ENCODE measurements at regions of chr9 and their contacts with region 1.

Region 1: GRCh38 chr9:34637356-34638137 is at the start of gene SIGMAR1:
- DNase-seq: peak; percentile 85 to 96 (median 93)
- ATAC-seq: peak; percentile 95
- H3K4me3 ChIP-seq: peak within 1 kb of the TSS; percentile 63 to 69
- H3K4me3 Mint-ChIP-seq: peak within 1 kb of the TSS; percentile 86
- H3K27ac ChIP-seq: peak within 1 kb of the TSS; percentile 55 to 86
- H3K27ac Mint-ChIP-seq: peak within 1 kb of the TSS; percentile 86
- H3K4me1 ChIP-seq: peaks cover 15% of the 10 kb centered on the region
- H3K4me1 Mint-ChIP-seq: peaks cover 36% of the 10 kb centered on the region
- H3K27me3 ChIP-seq: no peaks in the 10 kb centered on the region
- H3K27me3 Mint-ChIP-seq: no peaks in the 10 kb centered on the region
- CTCF ChIP-seq: no peak
- total RNA-seq, gene SIGMAR1: 8.5 to 9.6 TPM

Region 2: GRCh38 chr9:34437006-34437925 is 200.3 kb before region 1 on chr9:
- CTCF ChIA-PET with region 1: no interaction called
- POLR2A ChIA-PET with region 1: no interaction called
- intact Hi-C with region 1: loop called (anchors 1 kb)
- DNase-seq: peak; percentile 20 to 83 (median 61)
- ATAC-seq: peak; percentile 90
- H3K4me3 ChIP-seq: no peak overlapping the region
- H3K4me3 Mint-ChIP-seq: no peak overlapping the region
- H3K27ac ChIP-seq: no peak overlapping the region
- H3K27ac Mint-ChIP-seq: no peak overlapping the region
- H3K4me1 ChIP-seq: peaks cover 8% of the 10 kb centered on the region
- H3K4me1 Mint-ChIP-seq: peaks cover 17% of the 10 kb centered on the region
- H3K27me3 ChIP-seq: no peaks in the 10 kb centered on the region
- H3K27me3 Mint-ChIP-seq: no peaks in the 10 kb centered on the region
- CTCF ChIP-seq: peak; percentile 77

Region 3: GRCh38 chr9:34546834-34547827 is 90.4 kb before region 1 on chr9:
- CTCF ChIA-PET with region 1: interaction called, 11 read pairs
- POLR2A ChIA-PET with region 1: no interaction called
- intact Hi-C with region 1: loop called in 1 of 2 experiments (anchors 5 kb)
- DNase-seq: peak in 7 of 9 experiments; percentile 22 to 55 (median 48)
- ATAC-seq: peak; percentile 56
- H3K4me3 ChIP-seq: no peak overlapping the region
- H3K4me3 Mint-ChIP-seq: no peak overlapping the region
- H3K27ac ChIP-seq: no peak overlapping the region
- H3K27ac Mint-ChIP-seq: no peak overlapping the region
- H3K4me1 ChIP-seq: no peaks in the 10 kb centered on the region
- H3K4me1 Mint-ChIP-seq: no peaks in the 10 kb centered on the region
- H3K27me3 ChIP-seq: no peaks in the 10 kb centered on the region
- H3K27me3 Mint-ChIP-seq: peaks cover 22% of the 10 kb centered on the region
- CTCF ChIP-seq: peak; percentile 31

Region 4: DNA sequence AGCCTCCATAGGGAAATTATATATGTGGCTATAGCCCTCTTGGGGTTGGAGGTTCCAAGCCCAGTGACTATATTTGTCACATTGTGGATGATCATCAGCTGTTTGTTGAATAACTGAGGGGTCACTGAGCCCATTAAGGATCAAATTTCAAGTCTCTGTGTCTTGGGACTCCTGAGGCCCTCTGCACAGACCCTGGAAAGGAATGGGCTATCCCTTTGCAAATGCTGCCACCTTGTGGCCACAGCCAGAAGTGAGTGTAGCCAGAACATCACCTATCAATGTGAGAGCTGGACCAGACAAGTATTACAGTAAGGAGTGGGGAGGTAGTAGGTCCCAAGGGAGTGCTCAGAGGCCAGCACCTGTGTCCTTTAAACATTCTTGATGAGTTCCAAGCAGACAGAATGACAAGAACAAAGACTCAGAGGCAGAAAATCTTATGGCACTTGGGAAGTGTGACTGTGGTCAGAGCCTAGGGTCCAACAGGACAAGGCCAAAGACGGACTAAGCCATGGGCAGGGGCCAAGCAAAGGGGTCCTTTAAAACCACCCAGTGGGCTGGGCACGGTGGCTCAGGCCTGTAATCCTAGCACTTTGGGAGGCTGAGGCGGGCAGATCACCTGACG is 33.8 kb before region 1 on chr9:
- CTCF ChIA-PET with region 1: interaction called, 49 read pairs
- POLR2A ChIA-PET with region 1: no interaction called
- intact Hi-C with region 1: loop called in 1 of 2 experiments (anchors 5 kb)
- DNase-seq: peak; percentile 59 to 87 (median 80)
- ATAC-seq: peak; percentile 98
- H3K4me3 ChIP-seq: no peak overlapping the region
- H3K4me3 Mint-ChIP-seq: no peak overlapping the region
- H3K27ac ChIP-seq: no peak overlapping the region
- H3K27ac Mint-ChIP-seq: no peak overlapping the region
- H3K4me1 ChIP-seq: no peaks in the 10 kb centered on the region
- H3K4me1 Mint-ChIP-seq: no peaks in the 10 kb centered on the region
- H3K27me3 ChIP-seq: no peaks in the 10 kb centered on the region
- H3K27me3 Mint-ChIP-seq: peaks cover 3% of the 10 kb centered on the region
- CTCF ChIP-seq: peak; percentile 92

Region 5: DNA sequence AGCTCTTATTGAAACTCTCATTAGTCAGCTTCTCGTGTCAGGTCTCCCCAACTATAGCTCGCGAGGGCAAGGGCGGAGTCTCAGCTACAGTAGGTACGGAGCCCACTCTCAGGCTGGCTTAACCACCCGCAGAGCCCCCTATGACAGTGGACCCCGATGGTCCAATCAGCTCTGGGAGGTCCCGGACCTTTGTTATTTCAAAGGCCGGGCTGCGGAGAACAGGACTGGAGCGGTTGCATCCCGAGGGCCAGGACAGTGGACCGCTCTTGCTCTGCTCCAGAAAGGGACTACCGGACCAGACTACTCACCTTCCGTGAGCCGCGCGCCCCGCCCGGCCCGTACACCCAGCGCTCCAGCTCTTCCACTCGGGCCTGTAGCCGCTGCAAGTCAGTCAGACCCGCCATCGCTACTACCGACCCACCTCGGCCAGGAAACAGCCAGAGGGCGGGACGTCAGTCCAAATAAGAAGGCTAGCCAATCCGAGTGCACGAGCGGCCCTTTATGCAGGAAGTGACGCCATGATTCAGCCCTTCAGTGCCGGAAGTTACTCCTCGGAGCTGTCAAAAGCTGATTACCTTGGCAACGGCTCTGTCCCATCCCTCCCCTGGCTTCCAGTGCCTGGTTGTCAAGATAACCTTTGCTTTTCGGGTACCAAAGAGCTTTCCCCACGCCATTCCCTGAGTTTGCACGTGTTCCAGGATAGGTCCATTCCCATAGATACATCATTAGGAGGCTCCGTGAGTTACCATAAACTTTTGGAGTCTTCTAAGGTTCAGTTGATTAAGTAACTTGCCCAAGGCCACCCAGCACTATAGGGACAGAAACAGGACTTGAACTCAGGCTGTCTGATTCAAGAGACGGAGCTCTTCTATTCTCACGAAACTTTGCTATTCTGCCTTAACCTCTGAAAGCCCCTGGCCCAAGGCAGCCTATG is 17.2 kb before region 1 on chr9 and contains the start of gene DCTN3:
- CTCF ChIA-PET with region 1: interaction called, 230 read pairs
- POLR2A ChIA-PET with region 1: interaction called, 28 read pairs
- intact Hi-C with region 1: loop called in 1 of 2 experiments (anchors 1 kb)
- DNase-seq: peak; percentile 79 to 97 (median 89)
- ATAC-seq: peak; percentile 98
- H3K4me3 ChIP-seq: peak within 1 kb of the TSS; percentile 85 to 97
- H3K4me3 Mint-ChIP-seq: peak within 1 kb of the TSS; percentile 91
- H3K27ac ChIP-seq: peak within 1 kb of the TSS; percentile 73
- H3K27ac Mint-ChIP-seq: peak within 1 kb of the TSS; percentile 76
- H3K4me1 ChIP-seq: peaks cover 25% of the 10 kb centered on the region
- H3K4me1 Mint-ChIP-seq: peaks cover 34% of the 10 kb centered on the region
- H3K27me3 ChIP-seq: peaks cover 22 to 27% of the 10 kb centered on the region in 2 experiments
- H3K27me3 Mint-ChIP-seq: peaks cover 27% of the 10 kb centered on the region
- CTCF ChIP-seq: no peak
- total RNA-seq, gene DCTN3: 82.8 to 85.3 TPM

Region 6: DNA sequence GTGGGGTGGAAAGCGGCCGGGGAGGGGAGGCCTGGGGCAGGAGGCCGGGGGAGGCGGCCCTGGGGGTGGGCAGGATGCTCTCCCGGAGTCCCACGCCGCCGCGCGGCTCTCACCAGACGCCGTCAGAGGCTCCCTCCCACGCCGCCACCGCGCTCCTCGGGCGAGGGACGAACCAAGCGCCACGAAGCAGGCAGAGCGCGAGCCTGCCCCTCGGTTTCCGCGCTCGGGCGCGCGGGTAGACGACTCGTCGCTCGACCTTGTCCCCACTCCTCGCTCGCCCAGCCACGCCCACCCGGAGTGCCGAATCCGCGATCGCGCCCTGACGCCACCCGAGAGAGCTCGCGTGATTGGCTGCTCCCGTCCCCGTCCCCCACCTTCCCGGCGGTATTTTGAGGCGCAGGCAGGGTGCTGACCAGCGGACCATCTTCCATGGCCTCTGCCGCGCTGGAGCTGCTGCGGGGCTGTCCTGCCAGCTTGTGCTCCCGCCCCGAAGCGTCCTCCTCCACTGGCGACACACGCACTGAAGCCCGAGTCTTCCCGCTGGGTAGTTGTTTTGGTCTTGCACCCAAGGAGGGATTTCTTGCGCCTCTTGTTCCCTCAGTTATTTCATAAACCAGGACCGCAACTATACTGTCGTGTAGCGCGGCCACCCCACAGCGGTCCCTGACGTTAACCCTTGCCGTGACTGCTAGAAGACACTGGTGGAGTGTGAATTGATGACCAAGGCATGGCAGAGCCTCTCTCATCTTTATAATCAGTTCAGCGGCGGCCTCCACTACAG is 1620.9 kb after region 1 on chr9 and contains the start of gene GNE:
- CTCF ChIA-PET with region 1: no interaction called
- POLR2A ChIA-PET with region 1: no interaction called
- intact Hi-C with region 1: loop called in 1 of 2 experiments (anchors 5 kb)
- DNase-seq: peak; percentile 95 to 99 (median 98)
- ATAC-seq: peak; percentile 89
- H3K4me3 ChIP-seq: peak within 1 kb of the TSS; percentile 85 to 100
- H3K4me3 Mint-ChIP-seq: peak within 1 kb of the TSS; percentile 98
- H3K27ac ChIP-seq: peak within 1 kb of the TSS; percentile 90 to 91
- H3K27ac Mint-ChIP-seq: peak within 1 kb of the TSS; percentile 97
- H3K4me1 ChIP-seq: peaks cover 17% of the 10 kb centered on the region
- H3K4me1 Mint-ChIP-seq: peaks cover 16% of the 10 kb centered on the region
- H3K27me3 ChIP-seq: no peaks in the 10 kb centered on the region
- H3K27me3 Mint-ChIP-seq: no peaks in the 10 kb centered on the region
- CTCF ChIP-seq: no peak
- total RNA-seq, gene GNE: 17.3 to 17.4 TPM